Mammary epithelial cell (primary cell): ENCODE measurements at regions of chr1 and their contacts with region 1.

Region 1: DNA sequence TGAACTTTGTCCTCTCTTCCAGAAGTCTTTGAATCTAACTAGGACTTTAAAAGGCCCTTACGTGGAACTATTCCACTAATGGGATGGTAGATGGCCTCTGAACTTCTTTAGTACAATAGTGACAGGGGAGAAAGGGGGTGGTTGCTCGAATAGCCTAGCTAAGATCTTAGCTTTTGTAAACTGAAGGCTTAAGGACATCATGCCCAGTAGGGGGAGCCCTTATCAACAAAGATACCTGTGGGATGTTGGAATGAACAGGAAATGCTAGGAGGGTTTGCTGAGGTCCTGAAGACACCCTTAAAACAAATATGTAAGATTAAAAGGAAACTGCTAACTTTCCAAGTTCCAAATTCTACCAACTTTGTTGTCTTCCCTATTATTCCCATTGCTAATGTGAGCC is 33.2 kb downstream of the NHLH2 start:
- DNase-seq: peak; percentile 71
- H3K4me3 ChIP-seq: no peak overlapping the region
- H3K27ac ChIP-seq: no peak overlapping the region
- H3K4me1 ChIP-seq: peaks cover 2% of the 10 kb centered on the region
- H3K27me3 ChIP-seq: no peaks in the 10 kb centered on the region
- CTCF ChIP-seq: peak; percentile 64 to 80

Region 2: DNA sequence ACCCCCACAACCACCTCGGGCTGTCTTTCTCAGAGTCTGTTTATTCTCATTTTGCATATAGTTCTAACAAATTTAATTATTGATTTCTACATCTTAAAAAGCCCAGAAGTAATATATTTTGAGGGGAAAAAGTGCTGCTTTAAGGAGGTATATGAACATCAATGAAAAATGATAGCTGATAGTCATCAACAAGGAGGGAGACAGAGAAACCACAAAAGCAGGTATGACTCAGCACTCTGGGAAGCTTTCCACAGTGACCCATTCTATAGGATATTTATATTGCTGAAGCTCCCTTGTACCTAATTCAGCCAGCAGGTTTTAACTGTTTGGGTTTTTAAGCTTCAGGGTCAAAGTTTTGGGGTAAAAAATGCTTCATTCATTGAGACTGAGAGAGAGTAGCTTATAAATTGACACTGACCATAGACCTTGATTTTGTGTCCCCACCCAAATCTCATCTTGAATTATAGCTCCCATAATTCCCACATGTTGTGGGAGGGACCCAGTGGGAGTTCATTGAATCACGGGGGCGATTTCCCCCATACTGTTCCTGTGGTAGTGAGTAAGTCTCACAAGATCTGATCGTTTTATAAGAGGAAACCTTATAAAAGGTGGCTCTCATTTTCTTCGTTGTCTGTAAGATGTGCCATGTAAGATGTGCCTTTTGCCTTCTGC is 138.6 kb before region 1 on chr1:
- CTCF ChIA-PET with region 1: no interaction called
- dilution Hi-C with region 1: no loop called
- in situ Hi-C with region 1: no loop called
- intact Hi-C with region 1: no loop called
- DNase-seq: peak; percentile 80
- H3K4me3 ChIP-seq: no peak overlapping the region
- H3K27ac ChIP-seq: peak overlapping the region; percentile 31
- H3K4me1 ChIP-seq: peaks cover 23% of the 10 kb centered on the region
- H3K27me3 ChIP-seq: no peaks in the 10 kb centered on the region
- CTCF ChIP-seq: no peak

Region 3: GRCh38 chr1:115771847-115772457 is 35.8 kb before region 1 on chr1:
- CTCF ChIA-PET with region 1: no interaction called
- dilution Hi-C with region 1: no loop called
- in situ Hi-C with region 1: no loop called
- intact Hi-C with region 1: loop called (anchors 1 kb)
- DNase-seq: peak; percentile 94
- H3K4me3 ChIP-seq: no peak overlapping the region
- H3K27ac ChIP-seq: peak overlapping the region; percentile 86
- H3K4me1 ChIP-seq: peaks cover 6% of the 10 kb centered on the region
- H3K27me3 ChIP-seq: no peaks in the 10 kb centered on the region
- CTCF ChIP-seq: peak; percentile 80 to 87

Region 4: DNA sequence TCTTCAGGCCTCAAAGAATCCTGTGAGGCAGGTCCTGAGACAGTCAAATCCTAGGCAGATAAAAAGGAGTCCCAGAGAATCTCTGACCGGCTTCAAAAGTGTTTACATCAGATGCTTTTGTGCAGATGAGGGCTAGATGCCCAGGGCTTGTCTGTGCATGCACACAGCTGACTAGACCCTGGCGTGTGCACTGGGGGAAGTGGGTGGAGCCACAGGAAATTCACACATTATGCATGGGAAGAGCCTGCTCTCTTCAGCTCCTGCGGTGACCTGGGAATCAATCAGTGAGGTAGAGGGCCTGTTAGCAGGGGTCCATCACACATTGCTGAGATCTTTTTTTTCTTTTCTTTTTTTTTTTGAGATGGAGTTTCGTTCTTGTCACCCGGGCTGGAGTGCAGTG is 69.8 kb after region 1 on chr1:
- CTCF ChIA-PET with region 1: no interaction called
- dilution Hi-C with region 1: loop called (anchors 5 kb)
- in situ Hi-C with region 1: no loop called
- intact Hi-C with region 1: no loop called
- DNase-seq: peak; percentile 89
- H3K4me3 ChIP-seq: no peak overlapping the region
- H3K27ac ChIP-seq: no peak overlapping the region
- H3K4me1 ChIP-seq: peaks cover 28% of the 10 kb centered on the region
- H3K27me3 ChIP-seq: no peaks in the 10 kb centered on the region
- CTCF ChIP-seq: peak in 1 of 2 donors; percentile 5

Region 5: GRCh38 chr1:115980998-115981993 is 173.6 kb after region 1 on chr1:
- CTCF ChIA-PET with region 1: interaction called, 4 read pairs
- dilution Hi-C with region 1: loop called (anchors 5 kb)
- in situ Hi-C with region 1: loop called (anchors 5 to 10 kb)
- intact Hi-C with region 1: loop called (anchors 1 kb)
- DNase-seq: peak; percentile 51
- H3K4me3 ChIP-seq: no peak overlapping the region
- H3K27ac ChIP-seq: peak overlapping the region; percentile 9
- H3K4me1 ChIP-seq: peaks cover 29% of the 10 kb centered on the region
- H3K27me3 ChIP-seq: no peaks in the 10 kb centered on the region
- CTCF ChIP-seq: peak; percentile 54 to 69

Region 6: GRCh38 chr1:116504308-116505156 is 696.8 kb after region 1 on chr1:
- CTCF ChIA-PET with region 1: no interaction called
- dilution Hi-C with region 1: no loop called
- in situ Hi-C with region 1: no loop called
- intact Hi-C with region 1: loop called (anchors 10 kb)
- DNase-seq: peak; percentile 60
- H3K4me3 ChIP-seq: no peak overlapping the region
- H3K27ac ChIP-seq: peak overlapping the region; percentile 2
- H3K4me1 ChIP-seq: peaks cover 40% of the 10 kb centered on the region
- H3K27me3 ChIP-seq: no peaks in the 10 kb centered on the region
- CTCF ChIP-seq: no peak